Mucosa of descending colon (tissue), 3 donors: ENCODE measurements at regions of chr18 and their contacts with region 1.

Region 1: DNA sequence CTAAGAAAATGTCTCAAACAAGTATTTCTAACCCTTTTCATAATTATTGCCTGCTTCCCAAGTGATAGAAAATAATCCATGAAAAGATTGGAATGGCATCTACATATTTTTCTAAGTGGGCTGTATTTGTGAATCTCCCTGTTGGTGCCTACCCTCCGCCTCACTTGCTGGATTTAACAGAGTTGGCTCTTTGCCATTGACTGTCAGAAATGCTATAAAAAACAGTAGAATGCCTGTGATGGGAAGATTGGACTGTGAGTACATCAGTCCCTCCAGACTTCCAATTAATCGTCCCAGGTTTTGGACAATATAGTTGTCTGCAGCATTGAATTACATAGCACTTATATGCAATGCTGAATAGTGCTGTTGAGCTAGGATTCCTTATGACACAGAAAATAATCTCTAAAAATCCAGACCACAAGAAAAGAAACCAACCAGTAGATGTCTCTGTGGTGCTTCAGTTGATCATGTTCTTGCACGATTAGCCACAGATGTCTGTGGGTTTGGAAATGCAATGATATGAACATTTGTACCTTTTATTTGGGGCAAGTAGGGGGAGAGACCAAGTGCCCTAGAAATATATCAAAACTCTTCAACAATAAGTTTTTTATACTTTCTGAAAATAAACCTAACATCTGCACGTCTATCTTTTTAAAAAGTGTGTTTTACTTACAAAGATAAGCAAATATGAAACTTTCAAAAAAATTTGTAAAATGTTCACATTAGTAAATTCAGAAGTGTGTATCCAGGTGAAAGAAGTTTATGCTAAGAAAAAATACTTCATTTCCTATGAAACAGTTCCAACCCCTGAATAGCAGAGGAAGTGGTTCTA is 88.5 kb downstream of the DYNAP start:
- DNase-seq: peak in 1 of 3 donors; percentile 58
- ATAC-seq: peak; percentile 73
- H3K4me3 ChIP-seq: no peak overlapping the region
- H3K4me1 ChIP-seq: no peaks in the 10 kb centered on the region
- CTCF ChIP-seq: no peak

Region 2: GRCh38 chr18:54392543-54393023 is 287.0 kb before region 1 on chr18:
- intact Hi-C with region 1: loop called in 1 of 2 experiments (anchors 10 kb)
- DNase-seq: no peak
- ATAC-seq: peak; percentile 77
- H3K4me3 ChIP-seq: no peak overlapping the region
- H3K4me1 ChIP-seq: peaks cover 3% of the 10 kb centered on the region
- CTCF ChIP-seq: peak; percentile 39

Region 3: DNA sequence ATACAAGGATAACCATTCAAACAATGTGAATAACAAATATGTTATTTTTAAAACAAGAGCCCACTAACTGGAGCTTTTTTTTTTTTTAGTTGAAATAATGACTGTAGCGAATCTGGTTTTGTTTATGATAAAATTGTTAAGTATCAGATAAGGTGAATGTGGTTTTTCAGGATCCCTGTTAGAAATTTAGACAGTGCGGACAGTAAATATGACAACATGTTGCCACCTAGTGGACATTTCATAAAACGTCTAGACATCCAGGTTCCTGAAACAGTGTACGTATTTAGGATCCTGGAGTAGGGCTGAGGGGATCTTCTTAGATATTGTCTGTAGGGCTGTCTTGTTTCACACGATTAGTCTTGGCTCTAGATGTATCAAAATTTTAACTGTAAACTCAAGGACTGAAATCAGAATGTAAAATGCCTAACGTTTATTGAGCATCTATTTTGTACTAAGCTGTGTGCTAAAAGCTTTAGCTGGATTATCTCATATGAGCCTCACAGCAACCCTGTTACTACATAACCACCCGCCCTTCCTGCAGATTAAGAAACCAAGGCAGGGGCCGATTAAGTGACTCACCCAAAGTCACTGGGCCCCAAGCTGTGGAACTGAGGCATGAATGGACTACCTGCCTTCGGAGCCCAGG is 303.6 kb after region 1 on chr18:
- intact Hi-C with region 1: loop called (anchors 5 to 10 kb)
- DNase-seq: no peak
- ATAC-seq: peak; percentile 80
- H3K4me3 ChIP-seq: no peak overlapping the region
- H3K4me1 ChIP-seq: no peaks in the 10 kb centered on the region
- CTCF ChIP-seq: peak; percentile 11